ENCODE measurements at regions of chr6 and their contacts with region 1.

Region 1: GRCh38 chr6:160088069-160088783 is 33.4 kb upstream of the SLC22A1 start:
- DNase-seq: peak; percentile 44
- H3K4me3 ChIP-seq: no peak overlapping the region
- H3K27ac ChIP-seq: no peak overlapping the region
- H3K4me1 ChIP-seq: no peaks in the 10 kb centered on the region
- H3K27me3 ChIP-seq: no peaks in the 10 kb centered on the region
- CTCF ChIP-seq: peak; percentile 60 to 70
- POLR2A ChIP-seq: no peak

Region 2: DNA sequence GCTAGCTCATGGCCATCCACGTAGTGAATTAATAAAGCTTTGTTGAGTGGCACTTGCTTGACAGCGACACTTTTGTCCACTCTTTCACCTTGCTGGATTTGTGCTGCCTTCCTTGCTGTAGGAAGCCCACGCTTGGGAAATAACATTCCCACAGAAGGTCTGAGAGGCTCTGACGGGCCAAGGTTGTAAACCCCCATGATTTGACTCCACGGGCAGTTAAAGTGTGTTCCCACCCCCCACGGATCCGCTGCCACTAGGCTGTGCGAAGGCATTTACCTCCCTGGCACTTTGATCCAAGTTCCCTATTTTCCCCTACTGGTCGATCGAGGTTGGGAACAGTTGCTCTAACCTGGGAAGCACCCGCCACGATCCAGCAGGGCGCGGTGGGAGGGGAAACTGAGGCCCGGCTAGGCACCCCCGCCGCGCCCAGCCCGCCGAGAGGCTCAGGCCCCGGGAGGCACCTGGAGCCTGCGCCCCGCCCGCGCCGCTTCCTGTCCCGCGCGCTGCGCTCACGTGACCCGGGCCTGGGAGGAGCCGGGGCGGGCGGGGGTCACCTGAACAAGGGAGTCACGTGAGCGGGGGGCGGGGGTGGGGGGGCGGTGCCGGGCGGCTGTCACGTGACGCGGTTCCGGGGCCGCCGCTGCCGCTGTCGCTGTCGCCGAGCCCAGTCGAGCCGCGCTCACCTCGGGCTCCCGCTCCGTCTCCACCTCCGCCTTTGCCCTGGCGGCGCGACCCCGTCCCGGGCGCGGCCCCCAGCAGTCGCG is 119.6 kb before region 1 on chr6 and contains the start of gene IGF2R:
- CTCF ChIA-PET with region 1: interaction called, 5 read pairs
- POLR2A ChIA-PET with region 1: no interaction called
- dilution Hi-C with region 1: no loop called
- intact Hi-C with region 1: loop called (anchors 5 kb)
- DNase-seq: peak; percentile 69
- H3K4me3 ChIP-seq: peak within 1 kb of the TSS; percentile 71 to 93 (median 79)
- H3K27ac ChIP-seq: peak within 1 kb of the TSS; percentile 58
- H3K4me1 ChIP-seq: peaks cover 8% of the 10 kb centered on the region
- H3K27me3 ChIP-seq: peaks cover 6 to 14% of the 10 kb centered on the region in 2 experiments
- CTCF ChIP-seq: peak in 1 of 2 donors; percentile 23
- POLR2A ChIP-seq: peak; percentile 67
- total RNA-seq, gene IGF2R: 59.7 and 60.2 TPM in 2 replicates

Region 3: GRCh38 chr6:160198606-160199211 is 110.5 kb after region 1 on chr6:
- CTCF ChIA-PET with region 1: no interaction called
- POLR2A ChIA-PET with region 1: no interaction called
- dilution Hi-C with region 1: no loop called
- intact Hi-C with region 1: no loop called
- DNase-seq: no peak
- H3K4me3 ChIP-seq: no peak overlapping the region
- H3K27ac ChIP-seq: no peak overlapping the region
- H3K4me1 ChIP-seq: no peaks in the 10 kb centered on the region
- H3K27me3 ChIP-seq: no peaks in the 10 kb centered on the region
- CTCF ChIP-seq: no peak
- POLR2A ChIP-seq: no peak

Region 4: GRCh38 chr6:160455541-160456213 is 367.5 kb after region 1 on chr6:
- CTCF ChIA-PET with region 1: interaction called, 33 read pairs
- POLR2A ChIA-PET with region 1: no interaction called
- dilution Hi-C with region 1: no loop called
- intact Hi-C with region 1: loop called (anchors 1 kb)
- DNase-seq: peak; percentile 43
- H3K4me3 ChIP-seq: no peak overlapping the region
- H3K27ac ChIP-seq: no peak overlapping the region
- H3K4me1 ChIP-seq: no peaks in the 10 kb centered on the region
- H3K27me3 ChIP-seq: no peaks in the 10 kb centered on the region
- CTCF ChIP-seq: peak; percentile 77 to 80
- POLR2A ChIP-seq: no peak

Region 5: GRCh38 chr6:160534050-160534696 is 445.9 kb after region 1 on chr6:
- CTCF ChIA-PET with region 1: interaction called, 13 read pairs
- POLR2A ChIA-PET with region 1: no interaction called
- dilution Hi-C with region 1: no loop called
- intact Hi-C with region 1: no loop called
- DNase-seq: peak; percentile 47
- H3K4me3 ChIP-seq: no peak overlapping the region
- H3K27ac ChIP-seq: no peak overlapping the region
- H3K4me1 ChIP-seq: no peaks in the 10 kb centered on the region
- H3K27me3 ChIP-seq: no peaks in the 10 kb centered on the region
- CTCF ChIP-seq: peak; percentile 71 to 79
- POLR2A ChIP-seq: no peak

Measured in endothelial cell of umbilical vein (primary cell).